Left ventricle myocardium superior (tissue), 1 donor: ENCODE measurements at regions of chr4 and their contacts with region 1.

Region 1: GRCh38 chr4:186067757-186068385 is 1.1 kb upstream of the TLR3 start:
- DNase-seq: peak; percentile 55
- ATAC-seq: peak; percentile 93

Region 2: GRCh38 chr4:185886832-185887524 is 180.9 kb before region 1 on chr4:
- intact Hi-C with region 1: no loop called
- DNase-seq: no peak
- ATAC-seq: no peak

Region 3: DNA sequence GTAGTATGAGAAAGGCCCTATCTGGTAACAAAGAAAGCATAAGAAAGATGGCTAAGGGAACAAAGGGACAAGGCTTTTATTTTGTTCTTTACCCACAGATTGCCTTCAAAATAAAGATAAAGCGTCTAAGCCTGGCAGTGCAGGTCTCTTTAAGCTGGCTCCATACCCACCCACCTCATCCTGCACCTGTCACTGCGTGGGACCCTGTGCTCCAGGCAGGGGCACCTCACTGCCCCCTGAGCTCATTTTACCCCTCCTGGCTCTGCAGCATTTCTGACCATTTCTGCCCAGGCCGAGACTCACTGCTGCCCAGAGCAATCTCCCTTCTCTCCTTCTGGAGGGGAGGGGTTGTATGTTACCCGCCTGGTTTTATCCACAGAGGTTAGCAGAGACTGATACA is 121.8 kb after region 1 on chr4:
- intact Hi-C with region 1: loop called (anchors 5 kb)
- DNase-seq: no peak
- ATAC-seq: no peak